SK-N-SH (cell line): ENCODE measurements at regions of chr1 and their contacts with region 1.

Region 1: GRCh38 chr1:203117611-203118575 is 9.6 kb upstream of the ADORA1 start:
- DNase-seq: peak; percentile 95
- H3K4me3 ChIP-seq: peak overlapping the region in 1 of 2 experiments; percentile 35; a peak in 1 of 4 replicates
- H3K27ac ChIP-seq: no peak overlapping the region
- H3K4me1 ChIP-seq: no peaks in the 10 kb centered on the region; a peak in 1 of 4 replicates
- H3K27me3 ChIP-seq: peaks cover 11% of the 10 kb centered on the region
- CTCF ChIP-seq: peak; percentile 76
- EP300 ChIP-seq: no peak
- RAD21 ChIP-seq: peak; percentile 95

Region 2: GRCh38 chr1:203026031-203026989 is 91.6 kb before region 1 on chr1 and contains the start of gene PPFIA4:
- CTCF ChIA-PET with region 1: interaction called, 12 read pairs
- POLR2A ChIA-PET with region 1: no interaction called
- DNase-seq: peak; percentile 99
- H3K4me3 ChIP-seq: peak within 1 kb of the TSS; percentile 70 to 74
- H3K27ac ChIP-seq: peak within 1 kb of the TSS in 1 of 2 experiments; percentile 58; a peak in 1 of 4 replicates
- H3K4me1 ChIP-seq: peaks cover 0 to 34% of the 10 kb centered on the region in 2 experiments; a peak in 1 of 4 replicates
- H3K27me3 ChIP-seq: no peaks in the 10 kb centered on the region
- CTCF ChIP-seq: no peak
- EP300 ChIP-seq: 0 out of 4 replicates have a peak, but pooled peaks of 1 of the 2 experiments have one; percentile 16
- RAD21 ChIP-seq: peak; percentile 45
- polyA plus RNA-seq, gene PPFIA4: 4.4 and 5.5 TPM in 2 replicates

Region 3: DNA sequence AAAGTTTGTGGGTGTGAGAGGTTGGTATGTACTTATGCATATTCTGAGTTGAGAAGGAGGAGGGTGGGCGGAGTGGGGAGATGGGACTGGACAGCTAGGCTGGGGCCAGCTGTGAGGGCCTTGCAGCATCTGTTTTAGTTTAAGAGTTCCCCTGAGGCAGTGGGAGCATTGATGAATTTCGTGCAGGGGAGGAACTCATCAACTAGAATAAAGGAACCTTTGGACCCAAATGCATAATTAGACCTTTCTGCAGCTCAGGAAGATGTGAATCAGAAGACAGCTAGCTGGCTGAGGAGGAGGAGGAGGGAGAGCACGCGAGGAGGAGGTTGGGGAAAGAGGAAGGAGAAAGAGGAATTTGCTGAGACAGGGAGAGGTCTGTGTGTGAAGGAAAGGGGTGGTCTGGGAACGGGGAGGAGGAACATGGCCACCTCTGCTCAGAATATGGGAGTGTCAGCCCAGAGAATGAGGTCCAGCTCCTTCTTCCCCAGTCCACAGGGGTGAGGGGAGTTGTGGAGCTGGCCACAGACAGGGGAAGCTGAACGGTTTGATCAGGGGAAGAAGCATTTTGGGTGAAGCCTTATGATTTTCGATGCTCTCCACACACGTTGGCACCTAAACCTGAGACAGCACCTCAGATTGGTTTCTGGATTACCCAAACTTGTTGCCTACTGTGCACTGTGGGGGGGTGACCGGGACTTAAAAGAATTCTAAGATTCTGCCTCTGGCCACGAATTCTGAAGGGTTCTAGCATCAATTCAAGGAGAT is 59.8 kb before region 1 on chr1:
- CTCF ChIA-PET with region 1: interaction called, 48 read pairs
- POLR2A ChIA-PET with region 1: no interaction called
- DNase-seq: peak; percentile 83
- H3K4me3 ChIP-seq: no peak overlapping the region
- H3K27ac ChIP-seq: no peak overlapping the region
- H3K4me1 ChIP-seq: peaks cover 0 to 22% of the 10 kb centered on the region in 2 experiments; a peak in 1 of 4 replicates
- H3K27me3 ChIP-seq: no peaks in the 10 kb centered on the region
- CTCF ChIP-seq: no peak
- EP300 ChIP-seq: no peak
- RAD21 ChIP-seq: no peak

Region 4: DNA sequence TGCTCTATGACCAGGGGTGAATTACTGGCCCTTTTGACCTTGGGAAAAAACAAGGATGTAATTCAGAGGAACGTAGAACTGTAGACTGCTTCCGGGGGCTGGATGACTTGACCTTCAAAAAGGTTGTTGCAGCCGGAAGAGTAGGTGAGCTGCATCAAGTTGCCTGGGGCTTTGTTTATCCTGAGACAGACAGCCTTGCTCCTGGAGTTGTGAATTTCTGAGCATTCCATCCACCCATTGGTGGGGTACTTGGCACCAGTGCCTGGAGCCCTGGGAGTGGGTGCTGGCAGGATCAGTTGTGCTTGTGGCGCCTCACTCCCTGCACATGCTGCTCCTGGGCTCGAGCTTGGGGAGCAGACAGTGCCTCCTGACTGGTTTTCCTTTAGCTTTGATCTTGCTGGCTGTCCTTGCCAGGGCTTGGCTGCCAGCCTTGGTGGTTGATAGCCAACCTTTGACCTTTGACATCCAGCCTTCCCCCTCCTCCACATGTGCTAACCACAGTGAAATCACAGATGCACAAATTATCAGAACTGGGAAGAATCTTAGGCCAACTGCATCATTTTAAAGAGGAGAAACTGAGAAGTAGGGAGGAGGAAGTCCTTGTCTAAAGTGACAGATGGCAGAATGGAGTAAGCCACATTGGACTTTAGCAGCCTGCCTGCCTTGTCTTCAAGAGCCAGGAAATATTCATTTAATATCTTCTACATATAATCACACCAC is 15.8 kb before region 1 on chr1:
- CTCF ChIA-PET with region 1: interaction called, 10 read pairs
- POLR2A ChIA-PET with region 1: no interaction called
- DNase-seq: no peak
- H3K4me3 ChIP-seq: no peak overlapping the region
- H3K27ac ChIP-seq: no peak overlapping the region
- H3K4me1 ChIP-seq: no peaks in the 10 kb centered on the region; a peak in 1 of 4 replicates
- H3K27me3 ChIP-seq: no peaks in the 10 kb centered on the region; the same call in 1 of the 2 replicates
- CTCF ChIP-seq: no peak
- EP300 ChIP-seq: no peak
- RAD21 ChIP-seq: no peak

Region 5: GRCh38 chr1:203140743-203141520 is 23.0 kb after region 1 on chr1:
- CTCF ChIA-PET with region 1: interaction called, 10 read pairs
- POLR2A ChIA-PET with region 1: no interaction called
- DNase-seq: peak; percentile 84
- H3K4me3 ChIP-seq: no peak overlapping the region
- H3K27ac ChIP-seq: peak overlapping the region in 1 of 2 experiments; percentile 55; a peak in 2 of 4 replicates
- H3K4me1 ChIP-seq: peaks cover 0 to 32% of the 10 kb centered on the region in 2 experiments; a peak in 1 of 4 replicates
- H3K27me3 ChIP-seq: no peaks in the 10 kb centered on the region
- CTCF ChIP-seq: no peak
- EP300 ChIP-seq: peak in 1 of 2 experiments; percentile 74; a peak in 1 of 4 replicates
- RAD21 ChIP-seq: no peak; the same call in 1 of the 2 replicates

Region 6: GRCh38 chr1:203166566-203166940 is 48.7 kb after region 1 on chr1:
- CTCF ChIA-PET with region 1: interaction called, 49 read pairs
- POLR2A ChIA-PET with region 1: interaction called, 3 read pairs
- DNase-seq: no peak
- H3K4me3 ChIP-seq: no peak overlapping the region
- H3K27ac ChIP-seq: no peak overlapping the region
- H3K4me1 ChIP-seq: no peaks in the 10 kb centered on the region
- H3K27me3 ChIP-seq: no peaks in the 10 kb centered on the region
- CTCF ChIP-seq: no peak
- EP300 ChIP-seq: no peak
- RAD21 ChIP-seq: no peak

Region 7: DNA sequence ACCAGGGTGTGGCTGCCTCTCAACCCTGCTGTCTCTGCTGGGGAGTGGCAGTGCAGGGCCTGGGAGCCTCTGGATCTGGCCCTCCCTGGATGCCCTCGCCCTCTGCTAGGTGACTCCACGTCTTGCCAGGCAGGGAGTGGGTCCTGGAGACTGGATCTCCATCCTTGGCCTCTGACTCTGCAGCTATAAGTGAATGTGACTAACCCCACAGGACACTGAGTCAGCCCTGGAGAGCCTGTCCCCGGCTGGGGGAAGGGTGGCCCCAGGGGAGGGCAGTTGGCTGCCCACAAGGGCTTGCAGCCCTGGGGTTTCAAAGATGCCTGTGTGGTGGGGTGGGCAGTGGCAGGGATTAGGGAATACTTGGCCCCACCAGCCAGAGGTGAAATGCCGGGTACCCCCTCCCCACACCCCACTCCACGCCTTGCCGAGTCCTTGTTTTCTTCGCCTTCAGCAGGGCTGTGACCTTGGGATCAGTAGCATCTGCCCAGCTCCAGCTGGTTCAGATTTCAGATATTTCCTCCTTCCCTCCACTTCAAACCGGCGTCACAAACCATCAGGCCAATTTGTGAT is 59.7 kb after region 1 on chr1:
- CTCF ChIA-PET with region 1: interaction called, 49 read pairs
- POLR2A ChIA-PET with region 1: no interaction called
- DNase-seq: no peak
- H3K4me3 ChIP-seq: no peak overlapping the region
- H3K27ac ChIP-seq: peak overlapping the region in 1 of 2 experiments; percentile 57; a peak in 1 of 4 replicates
- H3K4me1 ChIP-seq: peaks cover 17 to 38% of the 10 kb centered on the region in 2 experiments; a peak in 2 of 4 replicates
- H3K27me3 ChIP-seq: no peaks in the 10 kb centered on the region
- CTCF ChIP-seq: no peak
- EP300 ChIP-seq: no peak
- RAD21 ChIP-seq: no peak